Caco-2 (cell line): ENCODE measurements at regions of chr6 and their contacts with region 1.

Region 1: DNA sequence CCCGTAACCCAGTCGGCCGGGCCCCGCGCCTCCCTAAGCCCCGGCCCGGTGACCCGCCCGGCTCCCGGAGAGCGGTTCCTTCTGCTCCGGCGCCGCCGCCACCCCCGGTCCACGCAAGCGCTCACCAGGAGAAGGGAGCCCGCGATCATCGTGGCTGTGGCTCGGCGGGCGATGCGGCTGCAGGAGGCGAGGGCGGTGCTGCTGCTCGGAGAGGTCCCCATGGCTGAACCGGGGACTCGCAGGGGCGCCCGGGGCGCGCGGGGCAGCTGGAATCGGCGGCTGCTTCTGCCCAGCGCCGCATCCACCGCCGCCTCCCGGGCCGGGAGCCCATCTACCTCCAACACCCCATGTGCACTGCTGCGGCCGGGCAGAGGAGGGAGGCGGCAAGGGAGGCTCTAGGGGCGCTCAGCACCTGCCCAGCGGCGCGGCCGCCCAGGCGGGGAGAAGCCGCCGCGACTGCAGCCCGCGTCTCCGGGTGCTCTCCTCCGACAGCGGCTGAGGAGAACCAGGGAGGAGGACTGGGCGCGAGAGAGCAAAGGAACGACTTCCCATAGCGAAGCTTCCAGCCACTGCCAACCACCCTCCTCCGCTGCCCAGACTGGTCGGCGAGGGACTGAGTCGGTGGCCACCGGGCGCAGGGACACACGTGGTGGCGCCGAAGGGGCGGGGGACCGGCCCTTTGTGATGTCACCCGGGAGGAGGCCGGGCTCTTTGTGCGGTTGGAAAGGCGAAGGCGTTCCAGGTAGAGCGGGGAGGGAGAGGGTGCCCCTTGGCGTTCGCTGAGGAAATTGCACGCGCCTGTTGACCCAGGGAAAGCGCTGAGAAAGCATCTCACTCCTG is at the start of gene TNFRSF21:
- DNase-seq: peak; percentile 93 to 95
- H3K4me3 ChIP-seq: peak within 1 kb of the TSS; percentile 91
- H3K4me3 Mint-ChIP-seq: peak within 1 kb of the TSS; percentile 88
- H3K27ac Mint-ChIP-seq: peak within 1 kb of the TSS; percentile 80
- H3K4me1 ChIP-seq: peaks cover 33% of the 10 kb centered on the region
- H3K4me1 Mint-ChIP-seq: peaks cover 18% of the 10 kb centered on the region
- H3K27me3 ChIP-seq: no peaks in the 10 kb centered on the region
- H3K27me3 Mint-ChIP-seq: no peaks in the 10 kb centered on the region
- CTCF ChIP-seq: peak; percentile 92 to 96
- total RNA-seq, gene TNFRSF21: 60.8 and 64.4 TPM in 2 replicates

Region 2: GRCh38 chr6:47235964-47236760 is 73.3 kb before region 1 on chr6:
- CTCF ChIA-PET with region 1: no interaction called
- POLR2A ChIA-PET with region 1: no interaction called
- intact Hi-C with region 1: loop called (anchors 5 kb)
- DNase-seq: no peak
- H3K4me3 ChIP-seq: no peak overlapping the region
- H3K4me3 Mint-ChIP-seq: no peak overlapping the region
- H3K27ac Mint-ChIP-seq: peak overlapping the region; percentile 17
- H3K4me1 ChIP-seq: peaks cover 58% of the 10 kb centered on the region
- H3K4me1 Mint-ChIP-seq: peaks cover 28% of the 10 kb centered on the region
- H3K27me3 ChIP-seq: no peaks in the 10 kb centered on the region
- H3K27me3 Mint-ChIP-seq: no peaks in the 10 kb centered on the region
- CTCF ChIP-seq: no peak

Region 3: GRCh38 chr6:47268572-47269187 is 40.8 kb before region 1 on chr6:
- CTCF ChIA-PET with region 1: no interaction called
- POLR2A ChIA-PET with region 1: no interaction called
- intact Hi-C with region 1: loop called (anchors 2 kb)
- DNase-seq: no peak
- H3K4me3 ChIP-seq: no peak overlapping the region
- H3K4me3 Mint-ChIP-seq: no peak overlapping the region
- H3K27ac Mint-ChIP-seq: peak overlapping the region; percentile 56
- H3K4me1 ChIP-seq: peaks cover 23% of the 10 kb centered on the region
- H3K4me1 Mint-ChIP-seq: peaks cover 38% of the 10 kb centered on the region
- H3K27me3 ChIP-seq: no peaks in the 10 kb centered on the region
- H3K27me3 Mint-ChIP-seq: no peaks in the 10 kb centered on the region
- CTCF ChIP-seq: no peak

Region 4: DNA sequence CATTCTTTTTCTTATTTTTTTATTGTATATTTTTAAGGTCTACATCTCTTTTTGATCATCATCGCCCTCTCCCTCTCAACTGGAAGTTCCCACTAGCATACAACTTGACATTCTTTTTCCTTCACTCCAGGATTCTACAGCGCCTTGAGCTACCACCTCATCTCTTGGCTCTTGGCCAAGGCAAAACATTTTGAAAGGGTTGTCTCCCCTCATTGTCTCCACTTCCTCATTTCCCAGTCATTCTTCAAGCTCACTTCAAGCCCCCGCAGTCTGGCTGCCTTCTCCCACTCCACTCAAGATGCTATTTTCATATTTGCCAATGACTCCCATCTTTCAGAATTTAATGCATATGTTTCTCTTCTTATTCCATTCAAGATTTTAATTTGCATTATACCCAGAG is 535.4 kb after region 1 on chr6:
- CTCF ChIA-PET with region 1: no interaction called
- POLR2A ChIA-PET with region 1: no interaction called
- intact Hi-C with region 1: no loop called
- DNase-seq: no peak
- H3K4me3 ChIP-seq: no peak overlapping the region
- H3K4me3 Mint-ChIP-seq: no peak overlapping the region
- H3K27ac Mint-ChIP-seq: no peak overlapping the region
- H3K4me1 ChIP-seq: no peaks in the 10 kb centered on the region
- H3K4me1 Mint-ChIP-seq: no peaks in the 10 kb centered on the region
- H3K27me3 ChIP-seq: no peaks in the 10 kb centered on the region
- H3K27me3 Mint-ChIP-seq: peaks cover 3% of the 10 kb centered on the region
- CTCF ChIP-seq: no peak